ENCODE measurements at regions of chr16 and their contacts with region 1.

Region 1: DNA sequence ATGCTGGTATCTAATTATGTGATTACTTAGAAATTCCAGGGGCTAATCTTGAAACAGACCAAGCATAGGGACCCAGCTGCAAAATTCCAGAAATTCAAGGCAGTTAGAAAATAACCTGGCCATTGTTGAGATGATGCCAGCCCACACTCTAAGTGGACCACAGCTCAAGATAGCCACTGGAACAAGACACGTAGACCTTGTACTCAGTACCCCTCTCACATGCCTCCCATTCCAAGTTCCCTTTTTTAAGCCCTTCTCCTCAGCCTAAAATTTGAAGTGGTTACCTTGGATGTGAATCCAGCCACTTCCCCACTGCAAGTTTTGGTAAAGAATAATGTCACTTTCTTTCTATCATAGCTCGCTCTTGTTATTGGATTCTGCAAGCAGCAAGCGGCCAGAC is 4.1 kb upstream of the ZNF19 start:
- DNase-seq: no peak
- H3K4me3 ChIP-seq: no peak overlapping the region
- H3K27ac ChIP-seq: no peak overlapping the region
- H3K4me1 ChIP-seq: no peaks in the 10 kb centered on the region
- H3K27me3 ChIP-seq: no peaks in the 10 kb centered on the region
- CTCF ChIP-seq: no peak

Region 2: DNA sequence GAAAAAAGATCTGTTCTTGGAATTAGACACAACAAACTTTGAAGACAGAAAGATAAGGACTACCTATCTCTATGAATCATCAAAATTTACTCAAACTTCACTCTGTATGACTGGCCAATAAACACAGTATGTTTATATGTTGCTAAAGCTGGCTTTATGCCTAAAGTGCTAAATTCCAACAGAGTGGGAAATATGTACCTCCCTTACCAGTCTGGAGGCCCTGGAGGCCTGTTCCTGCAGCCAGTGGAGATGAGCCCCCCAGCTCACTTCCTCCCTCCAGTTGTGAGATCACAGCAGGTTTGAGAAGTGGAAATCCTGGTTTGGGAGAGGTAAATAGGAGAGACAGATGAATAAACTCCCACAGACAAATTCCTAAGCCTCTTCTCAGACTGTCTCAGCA is 40.2 kb before region 1 on chr16:
- intact Hi-C with region 1: loop called (anchors 5 kb)
- DNase-seq: no peak
- H3K4me3 ChIP-seq: no peak overlapping the region
- H3K27ac ChIP-seq: no peak overlapping the region
- H3K4me1 ChIP-seq: no peaks in the 10 kb centered on the region
- H3K27me3 ChIP-seq: no peaks in the 10 kb centered on the region
- CTCF ChIP-seq: no peak

Region 3: DNA sequence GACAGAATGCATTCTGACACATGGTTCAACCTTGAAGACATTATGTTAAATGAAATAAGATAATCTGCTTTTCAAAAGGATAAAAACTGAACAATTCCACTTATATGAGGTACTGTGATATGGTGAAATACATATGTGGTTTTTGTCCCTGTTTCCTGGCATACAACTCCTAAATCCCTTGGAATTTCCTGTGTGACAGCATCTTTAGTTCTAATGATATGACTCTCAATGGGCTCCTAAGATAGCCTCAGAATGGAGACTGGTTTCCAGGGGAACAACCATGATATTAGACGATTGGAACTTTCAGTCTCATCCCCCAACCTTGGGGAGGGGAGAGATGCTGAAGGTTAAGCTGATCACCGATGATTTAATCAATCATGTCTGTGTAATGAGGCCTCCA is 269.0 kb after region 1 on chr16:
- intact Hi-C with region 1: no loop called
- DNase-seq: no peak
- H3K4me3 ChIP-seq: no peak overlapping the region
- H3K27ac ChIP-seq: no peak overlapping the region
- H3K4me1 ChIP-seq: peaks cover 0 to 13% (median 9%) of the 10 kb centered on the region in 4 donors
- H3K27me3 ChIP-seq: no peaks in the 10 kb centered on the region
- CTCF ChIP-seq: no peak

Measured in tibial artery (tissue), 4 donors.